Ovary (tissue), 10 donors: ENCODE measurements at regions of chr6 and their contacts with region 1.

Region 1: DNA sequence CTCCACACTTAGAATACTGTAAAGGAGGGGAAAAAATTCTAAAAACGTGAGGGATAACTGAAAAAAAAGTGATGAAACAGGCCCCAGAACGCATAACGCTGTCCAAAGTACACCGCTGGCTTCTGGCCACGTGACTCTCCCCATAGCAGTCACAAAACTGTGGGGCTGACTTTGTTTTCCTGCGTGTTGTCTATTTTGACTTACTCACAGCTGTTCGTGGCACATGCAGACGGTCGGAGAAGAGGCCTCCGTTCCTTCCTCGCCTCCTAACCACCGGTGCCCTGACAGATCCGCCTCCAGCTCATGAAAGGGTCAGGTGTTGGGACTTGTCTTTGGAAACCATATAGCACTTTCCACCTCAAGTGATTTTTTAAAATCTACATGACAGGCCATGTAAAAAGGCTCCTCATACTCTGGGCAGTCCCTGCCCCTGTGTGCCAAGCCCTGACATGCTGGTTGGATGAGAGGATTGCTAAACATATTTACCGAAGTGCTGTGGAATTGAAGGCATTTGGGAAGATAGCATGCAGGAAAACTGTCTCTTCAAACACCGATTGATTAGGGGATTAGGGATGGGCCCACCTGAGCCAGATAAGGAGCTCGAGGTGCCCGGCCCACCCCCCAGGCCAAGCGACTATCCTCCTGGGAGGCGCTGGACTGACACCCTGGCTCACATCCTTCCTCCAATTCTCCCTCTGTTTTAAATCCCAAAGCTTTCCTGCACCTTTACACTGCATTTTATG is 54.8 kb downstream of the DACT2 start:
- DNase-seq: peak; percentile 35 to 77 (median 61)
- H3K4me3 ChIP-seq: no peak overlapping the region
- H3K27ac ChIP-seq: no peak overlapping the region
- H3K4me1 ChIP-seq: peaks cover 3% of the 10 kb centered on the region
- H3K27me3 ChIP-seq: no peaks in the 10 kb centered on the region
- CTCF ChIP-seq: no peak
- EP300 ChIP-seq: no peak
- POLR2A ChIP-seq: no peak

Region 2: GRCh38 chr6:168201383-168201782 is 63.4 kb before region 1 on chr6:
- intact Hi-C with region 1: no loop called
- DNase-seq: no peak
- H3K4me3 ChIP-seq: no peak overlapping the region
- H3K27ac ChIP-seq: no peak overlapping the region
- H3K4me1 ChIP-seq: no peaks in the 10 kb centered on the region
- H3K27me3 ChIP-seq: no peaks in the 10 kb centered on the region
- CTCF ChIP-seq: no peak
- EP300 ChIP-seq: no peak
- POLR2A ChIP-seq: no peak

Region 3: GRCh38 chr6:168226061-168226752 is 38.6 kb before region 1 on chr6:
- intact Hi-C with region 1: no loop called
- DNase-seq: no peak
- H3K4me3 ChIP-seq: no peak overlapping the region
- H3K27ac ChIP-seq: no peak overlapping the region
- H3K4me1 ChIP-seq: no peaks in the 10 kb centered on the region
- H3K27me3 ChIP-seq: no peaks in the 10 kb centered on the region
- CTCF ChIP-seq: no peak
- EP300 ChIP-seq: no peak
- POLR2A ChIP-seq: no peak

Region 4: DNA sequence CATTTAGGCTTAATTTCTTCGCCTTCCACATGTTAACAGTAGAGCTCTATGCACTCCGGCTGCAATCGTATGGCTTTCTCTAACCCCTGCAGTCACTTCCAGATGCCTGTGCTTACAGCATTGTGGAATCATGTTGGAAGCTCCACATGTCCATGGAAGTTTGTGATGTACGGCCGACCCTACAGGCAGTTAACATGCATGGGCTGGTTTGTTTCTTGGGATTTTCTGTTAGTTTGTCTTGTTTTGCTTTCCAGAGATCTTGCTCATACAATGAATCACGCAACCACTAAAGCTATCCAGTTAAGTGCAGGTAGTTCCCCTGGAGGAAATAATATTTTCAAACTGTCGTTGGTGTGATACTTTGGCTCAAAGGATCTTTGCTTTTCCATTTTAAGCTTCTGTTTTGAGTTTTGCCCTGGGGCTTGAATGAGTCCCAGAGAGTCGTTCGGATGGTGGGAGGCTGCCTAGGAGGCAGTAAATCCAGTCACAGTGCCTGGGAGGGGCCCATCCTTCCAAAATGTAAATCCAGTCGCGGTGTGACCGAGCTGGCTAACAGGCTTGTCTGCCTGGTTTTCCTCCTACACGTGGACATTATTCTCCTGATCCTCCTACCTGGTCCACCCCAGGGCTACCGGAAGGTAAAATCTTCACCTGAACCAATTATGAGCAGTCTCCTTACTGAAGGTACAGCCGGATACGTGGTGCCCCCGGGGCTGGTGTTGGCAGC is 402.1 kb after region 1 on chr6:
- intact Hi-C with region 1: loop called in 1 of 4 experiments (anchors 10 kb)
- DNase-seq: no peak
- H3K4me3 ChIP-seq: no peak overlapping the region
- H3K27ac ChIP-seq: no peak overlapping the region
- H3K4me1 ChIP-seq: no peaks in the 10 kb centered on the region
- H3K27me3 ChIP-seq: no peaks in the 10 kb centered on the region
- CTCF ChIP-seq: no peak
- EP300 ChIP-seq: no peak
- POLR2A ChIP-seq: no peak